Activated naive CD8-positive, alpha-beta T cell treated with anti-CD3 and anti-CD28 coated beads, Interleukin-2, amount 10 ng/mL, durations not matched to agents 7 days and 5 days (primary cell): ENCODE measurements at regions of chr1 and their contacts with region 1.

Region 1: DNA sequence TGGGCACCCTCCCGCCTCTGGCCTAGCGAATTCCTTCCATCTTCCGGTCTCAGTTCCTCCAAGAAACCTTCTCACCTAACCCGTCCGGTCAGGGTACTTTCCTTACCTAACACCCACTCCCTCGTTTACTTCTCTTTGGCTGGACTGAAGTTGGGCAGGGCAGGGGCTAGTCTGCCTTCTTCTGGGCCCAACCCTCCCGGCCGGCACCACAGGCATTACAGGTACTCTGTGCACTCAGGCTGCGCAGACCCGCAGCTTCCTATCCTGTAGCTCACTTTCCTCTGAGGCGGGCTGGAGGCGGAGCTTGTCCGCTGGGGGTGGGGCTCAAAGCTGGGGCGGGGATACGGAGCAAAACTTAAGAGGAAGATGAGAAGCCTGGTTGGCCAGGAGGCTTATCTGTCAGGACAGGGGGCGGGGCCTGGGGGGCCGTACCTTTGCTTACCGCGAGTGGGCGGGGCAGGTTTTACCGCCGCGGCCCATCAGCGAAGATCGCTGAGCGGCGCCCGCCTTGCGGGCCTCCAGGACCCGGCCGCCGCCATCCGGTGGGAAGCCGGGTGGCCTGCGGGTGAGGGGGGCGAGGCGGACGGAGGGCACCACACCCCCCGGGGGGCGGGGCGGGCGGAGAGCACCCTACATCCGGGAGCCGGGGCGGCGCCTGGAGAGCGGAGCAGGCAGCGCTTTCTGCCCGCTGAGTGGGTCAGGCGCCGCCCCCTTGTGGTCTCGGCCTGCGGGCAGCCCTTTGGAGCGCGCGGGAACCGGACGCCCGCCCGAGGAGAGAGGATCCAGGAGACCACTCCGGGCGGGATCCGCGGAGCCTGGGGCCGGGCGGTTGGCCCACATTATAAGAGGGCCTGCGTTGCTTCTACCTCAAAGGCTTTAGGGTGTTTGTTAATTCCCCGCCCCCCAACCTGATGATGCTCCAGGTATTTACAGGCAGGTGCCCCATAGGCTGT is 31.9 kb downstream of the ZNF648 start:
- DNase-seq: peak; percentile 98
- ATAC-seq: peak; percentile 94
- H3K4me3 Mint-ChIP-seq: peak overlapping the region; percentile 99
- H3K27ac Mint-ChIP-seq: peak overlapping the region; percentile 99
- H3K4me1 Mint-ChIP-seq: peaks cover 12% of the 10 kb centered on the region
- H3K27me3 Mint-ChIP-seq: peaks cover 4% of the 10 kb centered on the region

Region 2: DNA sequence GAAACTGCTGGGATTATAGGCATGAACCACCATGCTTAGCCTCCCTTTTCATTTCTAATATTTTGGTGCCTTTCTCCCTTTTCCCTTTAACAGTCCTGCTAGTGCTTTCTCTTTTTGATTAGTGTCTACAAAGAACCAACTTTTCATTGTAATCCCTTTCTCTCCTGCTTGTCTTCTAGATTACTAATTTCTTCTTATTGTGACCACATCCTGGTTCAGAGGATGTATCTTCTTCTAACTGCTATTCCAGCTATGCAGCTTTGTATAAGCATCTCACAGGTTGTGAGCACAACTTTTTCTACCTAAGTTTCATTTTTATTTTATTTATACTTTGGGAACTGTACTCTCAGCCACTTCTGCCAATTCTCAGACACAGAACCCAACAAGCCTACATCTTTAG is 17.1 kb after region 1 on chr1:
- POLR2A ChIA-PET with region 1: interaction called, 11 read pairs
- DNase-seq: no peak
- ATAC-seq: peak; percentile 91
- H3K4me3 Mint-ChIP-seq: peak overlapping the region; percentile 71
- H3K27ac Mint-ChIP-seq: peak overlapping the region; percentile 94
- H3K4me1 Mint-ChIP-seq: peaks cover 30% of the 10 kb centered on the region
- H3K27me3 Mint-ChIP-seq: no peaks in the 10 kb centered on the region